A673 (cell line): ENCODE measurements at regions of chr6 and their contacts with region 1.

Region 1: DNA sequence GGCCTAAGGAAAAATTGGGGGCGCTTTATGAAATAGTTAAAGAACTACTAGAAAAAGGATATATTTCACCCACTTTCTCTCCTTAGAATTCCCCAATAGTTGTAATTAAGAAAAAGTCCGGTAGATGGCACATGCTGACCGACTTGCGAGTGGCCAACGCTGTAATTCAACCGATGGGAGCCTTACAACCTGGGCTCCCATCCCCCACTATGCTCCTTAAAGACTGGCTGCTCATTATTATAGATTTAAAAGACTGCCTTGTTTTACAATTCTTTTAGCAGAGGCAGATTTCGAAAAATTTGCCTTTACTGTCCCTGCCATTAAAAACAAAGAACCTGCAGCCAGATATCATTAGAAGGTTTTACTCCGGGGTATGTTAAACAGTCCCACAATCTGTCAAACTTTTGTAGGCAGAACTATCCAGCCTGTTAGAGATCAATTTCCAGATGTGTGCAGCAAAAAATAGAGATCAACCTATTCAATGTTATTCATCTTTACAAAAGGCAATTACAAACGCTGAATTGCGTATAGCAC is 58.5 kb upstream of the PRSS16 start:
- DNase-seq: peak; percentile 87
- H3K4me3 ChIP-seq: peak overlapping the region; percentile 59
- H3K27ac ChIP-seq: peak overlapping the region; percentile 5
- H3K4me1 ChIP-seq: no peaks in the 10 kb centered on the region
- H3K27me3 ChIP-seq: no peaks in the 10 kb centered on the region
- CTCF ChIP-seq: peak; percentile 67

Region 2: GRCh38 chr6:26754212-26754611 is 434.7 kb before region 1 on chr6:
- CTCF ChIA-PET with region 1: no interaction called
- POLR2A ChIA-PET with region 1: no interaction called
- intact Hi-C with region 1: no loop called
- DNase-seq: no peak
- H3K4me3 ChIP-seq: peak overlapping the region; percentile 12
- H3K27ac ChIP-seq: no peak overlapping the region
- H3K4me1 ChIP-seq: no peaks in the 10 kb centered on the region
- H3K27me3 ChIP-seq: peaks cover 8% of the 10 kb centered on the region
- CTCF ChIP-seq: no peak

Region 3: GRCh38 chr6:27279513-27280063 is 90.6 kb after region 1 on chr6:
- CTCF ChIA-PET with region 1: no interaction called
- POLR2A ChIA-PET with region 1: no interaction called
- intact Hi-C with region 1: loop called (anchors 5 kb)
- DNase-seq: no peak
- H3K4me3 ChIP-seq: peak overlapping the region; percentile 54
- H3K27ac ChIP-seq: peak overlapping the region; percentile 26
- H3K4me1 ChIP-seq: peaks cover 6% of the 10 kb centered on the region
- H3K27me3 ChIP-seq: no peaks in the 10 kb centered on the region
- CTCF ChIP-seq: no peak

Region 4: DNA sequence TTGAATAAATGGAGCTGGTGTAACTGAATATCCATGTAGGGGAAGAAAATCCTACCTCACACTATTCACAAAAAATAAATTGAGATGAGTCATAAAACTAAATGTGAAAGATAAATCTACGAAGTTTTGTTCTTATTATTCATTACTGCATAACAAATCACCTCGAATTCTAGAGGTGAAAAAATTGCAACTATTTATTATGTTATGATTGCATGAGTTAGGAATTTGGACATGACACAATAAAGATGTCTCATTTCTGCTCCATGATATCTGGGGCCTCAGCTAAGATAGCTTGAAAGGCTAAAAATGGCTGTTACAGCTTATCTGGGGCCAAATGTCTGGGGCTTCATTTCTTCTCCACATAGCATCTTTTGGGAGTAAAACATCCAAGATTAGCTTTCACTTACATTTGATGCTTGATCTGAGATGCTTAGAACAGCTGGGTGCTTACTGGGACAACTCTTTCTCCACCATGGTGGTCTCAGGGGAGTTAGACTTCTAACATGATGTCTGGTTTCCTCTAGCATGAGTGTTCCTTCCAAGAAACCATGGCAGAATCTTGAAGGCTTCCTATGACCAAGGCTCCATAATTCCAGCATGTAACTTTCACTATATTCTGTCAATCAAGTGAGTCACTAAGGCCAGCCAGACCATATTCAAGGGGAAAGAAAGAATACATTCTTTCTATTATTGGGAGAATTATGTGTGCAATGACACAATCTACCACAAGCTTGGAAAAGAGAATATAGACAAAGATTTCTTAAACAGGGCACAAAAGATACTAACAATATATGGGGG is 798.2 kb after region 1 on chr6:
- CTCF ChIA-PET with region 1: no interaction called
- POLR2A ChIA-PET with region 1: no interaction called
- intact Hi-C with region 1: no loop called
- DNase-seq: no peak
- H3K4me3 ChIP-seq: no peak overlapping the region
- H3K27ac ChIP-seq: no peak overlapping the region
- H3K4me1 ChIP-seq: no peaks in the 10 kb centered on the region
- H3K27me3 ChIP-seq: peaks cover 13% of the 10 kb centered on the region
- CTCF ChIP-seq: no peak